Heart right ventricle (tissue), 16 donors: ENCODE measurements at regions of chr1 and their contacts with region 1.

Region 1: DNA sequence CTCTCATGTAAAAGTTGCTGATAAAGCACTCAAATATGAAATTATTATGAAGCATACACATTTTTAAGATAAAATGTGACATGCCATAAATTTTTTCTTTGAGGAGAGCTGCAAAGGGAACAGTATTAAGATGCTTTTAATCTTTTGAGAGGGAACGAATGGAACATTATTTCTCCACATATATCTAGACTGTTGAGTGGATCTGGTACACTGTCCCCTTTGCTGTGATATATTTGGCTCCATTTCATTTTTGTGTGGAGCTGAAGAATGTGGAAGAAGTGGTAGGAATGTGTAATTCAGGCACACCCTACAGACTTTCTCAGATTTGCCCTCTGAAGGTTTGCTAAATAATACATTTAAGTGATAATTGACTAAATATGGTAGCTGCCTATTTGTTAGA is 31.7 kb downstream of the PGM1 start:
- DNase-seq: no peak
- ATAC-seq: no peak
- H3K4me3 ChIP-seq: no peak overlapping the region
- H3K27ac ChIP-seq: peak overlapping the region in 5 of 10 donors; percentile 10 to 36 (median 29)
- H3K4me1 ChIP-seq: peaks cover 0 to 57% (median 39%) of the 10 kb centered on the region in 9 donors
- H3K27me3 ChIP-seq: no peaks in the 10 kb centered on the region
- CTCF ChIP-seq: no peak

Region 2: GRCh38 chr1:63276624-63277023 is 348.3 kb before region 1 on chr1:
- intact Hi-C with region 1: no loop called
- DNase-seq: no peak
- ATAC-seq: no peak
- H3K4me3 ChIP-seq: no peak overlapping the region
- H3K27ac ChIP-seq: no peak overlapping the region
- H3K4me1 ChIP-seq: no peaks in the 10 kb centered on the region
- H3K27me3 ChIP-seq: peaks cover 0 to 39% (median 37%) of the 10 kb centered on the region in 7 donors
- CTCF ChIP-seq: no peak

Region 3: DNA sequence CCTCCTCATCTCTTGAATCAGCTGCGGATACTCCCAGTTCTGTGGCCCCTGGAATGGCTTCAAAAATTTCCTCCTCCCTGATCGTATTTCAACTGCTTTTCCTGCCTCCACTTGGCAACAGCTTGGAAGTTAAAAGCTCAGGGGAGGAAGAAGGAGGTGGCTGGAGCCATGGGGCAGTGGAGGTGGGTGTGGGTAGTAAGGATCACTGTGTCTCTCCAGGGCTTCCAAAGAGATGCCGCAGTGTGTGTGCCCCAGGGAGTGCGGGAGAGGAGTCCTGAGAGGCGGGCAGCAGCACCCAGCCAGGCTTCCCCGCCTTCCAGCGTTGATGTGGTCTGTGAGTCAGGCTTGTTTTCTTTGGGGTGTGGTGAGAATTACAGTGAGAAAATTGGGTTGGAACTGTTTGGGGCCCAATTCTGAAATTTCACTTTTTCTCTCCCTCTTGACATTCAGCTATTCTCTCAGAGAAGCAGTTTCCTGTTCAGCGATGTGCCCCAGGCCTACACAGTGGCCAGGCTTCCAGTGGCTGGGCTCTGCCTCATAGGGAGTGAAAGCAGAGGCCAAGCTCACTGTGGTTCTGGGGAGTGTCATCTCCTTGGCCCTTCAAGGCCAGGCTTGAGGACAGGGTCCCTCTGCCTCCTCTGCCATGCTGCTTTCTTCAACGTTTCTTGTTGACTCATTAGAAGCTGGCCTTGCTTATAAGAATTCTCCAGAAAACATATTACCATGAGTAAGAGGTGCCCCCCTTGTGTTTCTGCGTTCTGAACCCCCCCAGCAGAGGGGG is 37.3 kb after region 1 on chr1:
- intact Hi-C with region 1: loop called in 1 of 10 experiments (anchors 5 kb)
- DNase-seq: peak in 1 of 2 donors; percentile 26
- ATAC-seq: peak; percentile 33 to 70 (median 52)
- H3K4me3 ChIP-seq: no peak overlapping the region
- H3K27ac ChIP-seq: peak overlapping the region in 8 of 10 donors; percentile 5 to 73 (median 46)
- H3K4me1 ChIP-seq: peaks cover 0 to 24% (median 16%) of the 10 kb centered on the region in 9 donors
- H3K27me3 ChIP-seq: no peaks in the 10 kb centered on the region
- CTCF ChIP-seq: no peak

Region 4: GRCh38 chr1:64231153-64231552 is 606.2 kb after region 1 on chr1:
- intact Hi-C with region 1: loop called in 1 of 10 experiments (anchors 5 kb)
- DNase-seq: no peak
- ATAC-seq: no peak
- H3K4me3 ChIP-seq: no peak overlapping the region
- H3K27ac ChIP-seq: no peak overlapping the region
- H3K4me1 ChIP-seq: no peaks in the 10 kb centered on the region
- H3K27me3 ChIP-seq: peaks cover 0 to 4% (median 0%) of the 10 kb centered on the region in 7 donors
- CTCF ChIP-seq: no peak